GM12878 (cell line): ENCODE measurements at regions of chrX and their contacts with region 1.

Region 1: GRCh38 chrX:144566592-144566991 is 680.7 kb upstream of the SPANXN1 start:
- DNase-seq: no peak
- ATAC-seq: peak; percentile 49
- H3K4me3 ChIP-seq: no peak overlapping the region
- H3K27ac ChIP-seq: no peak overlapping the region
- H3K4me1 ChIP-seq: no peaks in the 10 kb centered on the region
- H3K27me3 ChIP-seq: no peaks in the 10 kb centered on the region
- CTCF ChIP-seq: no peak; a peak in 1 of 6 replicates
- EP300 ChIP-seq: no peak
- POLR2A ChIP-seq: no peak
- RAD21 ChIP-seq: no peak

Region 2: GRCh38 chrX:144586756-144587155 is 20.2 kb after region 1 on chrX:
- CTCF ChIA-PET with region 1: no interaction called
- POLR2A ChIA-PET with region 1: no interaction called
- RAD21 ChIA-PET with region 1: no interaction called
- SMC1A ChIA-PET with region 1: no interaction called
- in situ Hi-C with region 1: no loop called
- intact Hi-C with region 1: no loop called
- DNase-seq: no peak
- ATAC-seq: no peak
- H3K4me3 ChIP-seq: no peak overlapping the region
- H3K27ac ChIP-seq: no peak overlapping the region
- H3K4me1 ChIP-seq: no peaks in the 10 kb centered on the region
- H3K27me3 ChIP-seq: no peaks in the 10 kb centered on the region
- CTCF ChIP-seq: no peak
- EP300 ChIP-seq: no peak
- POLR2A ChIP-seq: no peak
- RAD21 ChIP-seq: no peak

Region 3: DNA sequence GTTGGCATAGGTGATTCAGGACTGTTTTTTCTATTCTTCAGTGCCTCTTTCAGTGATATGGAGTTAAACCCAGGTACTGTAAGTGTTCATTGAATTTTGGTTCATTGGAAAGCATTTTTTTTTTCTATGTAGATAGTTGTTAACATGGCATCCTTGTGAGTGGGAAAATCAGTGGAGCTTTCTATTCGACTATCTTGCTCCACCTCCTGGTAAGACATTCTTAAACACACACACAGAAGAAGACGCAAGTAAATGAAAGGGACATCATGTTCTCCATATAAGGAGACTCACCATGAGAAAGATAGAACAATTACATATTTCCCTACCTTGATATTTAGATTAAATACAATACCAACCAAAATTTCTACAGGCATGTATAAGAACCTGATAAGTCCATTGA is 82.2 kb after region 1 on chrX:
- CTCF ChIA-PET with region 1: interaction called, 10 read pairs
- POLR2A ChIA-PET with region 1: no interaction called
- RAD21 ChIA-PET with region 1: no interaction called
- SMC1A ChIA-PET with region 1: no interaction called
- in situ Hi-C with region 1: no loop called
- intact Hi-C with region 1: no loop called
- DNase-seq: no peak
- ATAC-seq: peak; percentile 45; the same call in 2 of the 3 replicates
- H3K4me3 ChIP-seq: no peak overlapping the region
- H3K27ac ChIP-seq: no peak overlapping the region
- H3K4me1 ChIP-seq: no peaks in the 10 kb centered on the region
- H3K27me3 ChIP-seq: no peaks in the 10 kb centered on the region
- CTCF ChIP-seq: no peak
- EP300 ChIP-seq: no peak
- POLR2A ChIP-seq: no peak
- RAD21 ChIP-seq: no peak